ENCODE measurements at regions of chr4 and their contacts with region 1.

Region 1: GRCh38 chr4:3871181-3871871 is 105.1 kb downstream of the ADRA2C start:
- DNase-seq: peak; percentile 50
- ATAC-seq: no peak

Region 2: DNA sequence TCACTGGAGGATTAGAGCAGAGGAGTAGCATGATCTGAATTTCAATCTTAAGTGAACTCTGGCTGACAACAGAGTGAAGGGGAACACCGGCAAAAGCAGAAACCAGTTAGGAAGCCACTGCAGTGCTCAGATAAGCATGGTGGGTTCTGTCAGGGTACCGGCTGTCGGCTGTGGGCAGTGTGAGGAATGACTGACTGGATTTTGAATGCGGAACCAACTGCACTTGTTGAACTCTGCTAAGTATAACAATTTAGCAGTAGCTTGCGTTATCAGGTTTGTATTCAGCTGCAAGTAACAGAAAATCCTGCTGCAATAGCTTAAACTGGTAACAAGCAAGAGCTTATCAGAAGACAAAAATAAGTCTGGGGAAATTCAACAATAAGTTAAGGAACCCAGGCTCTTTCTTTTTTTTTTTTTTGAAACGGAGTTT is 791.6 kb before region 1 on chr4:
- intact Hi-C with region 1: loop called (anchors 5 kb)
- DNase-seq: no peak
- ATAC-seq: no peak

Region 3: DNA sequence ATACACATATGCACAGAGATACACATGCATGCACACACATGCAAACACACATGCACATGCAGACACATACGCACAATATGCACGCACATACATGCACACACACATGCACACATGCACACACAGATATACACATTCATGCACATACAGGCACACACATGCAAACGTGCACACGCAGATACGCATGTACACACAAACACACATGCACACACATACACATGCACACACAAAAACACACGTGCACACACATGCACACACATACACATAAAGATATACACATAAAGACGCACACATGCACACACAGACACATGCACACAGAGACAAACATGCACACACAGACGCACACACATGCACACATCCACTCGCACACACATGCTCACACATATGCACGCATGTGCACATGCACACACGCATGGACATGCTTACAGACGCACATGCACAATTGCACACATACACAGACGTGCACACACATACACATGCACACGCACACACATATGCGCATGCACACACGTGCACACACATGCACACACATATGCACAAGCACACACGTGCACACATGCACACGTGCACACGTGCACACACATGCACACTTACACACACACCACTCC is 40.0 kb after region 1 on chr4:
- intact Hi-C with region 1: no loop called
- DNase-seq: no peak
- ATAC-seq: no peak

Measured in sciatic nerve (tissue), 2 donors.